ENCODE measurements at regions of chr2 and their contacts with region 1.

Region 1: GRCh38 chr2:174985630-174986029 is 19.6 kb downstream of the CHN1 start:
- DNase-seq: no peak
- H3K4me3 Mint-ChIP-seq: no peak overlapping the region
- H3K27ac Mint-ChIP-seq: no peak overlapping the region
- H3K4me1 Mint-ChIP-seq: no peaks in the 10 kb centered on the region
- H3K27me3 Mint-ChIP-seq: no peaks in the 10 kb centered on the region
- CTCF ChIP-seq: no peak

Region 2: DNA sequence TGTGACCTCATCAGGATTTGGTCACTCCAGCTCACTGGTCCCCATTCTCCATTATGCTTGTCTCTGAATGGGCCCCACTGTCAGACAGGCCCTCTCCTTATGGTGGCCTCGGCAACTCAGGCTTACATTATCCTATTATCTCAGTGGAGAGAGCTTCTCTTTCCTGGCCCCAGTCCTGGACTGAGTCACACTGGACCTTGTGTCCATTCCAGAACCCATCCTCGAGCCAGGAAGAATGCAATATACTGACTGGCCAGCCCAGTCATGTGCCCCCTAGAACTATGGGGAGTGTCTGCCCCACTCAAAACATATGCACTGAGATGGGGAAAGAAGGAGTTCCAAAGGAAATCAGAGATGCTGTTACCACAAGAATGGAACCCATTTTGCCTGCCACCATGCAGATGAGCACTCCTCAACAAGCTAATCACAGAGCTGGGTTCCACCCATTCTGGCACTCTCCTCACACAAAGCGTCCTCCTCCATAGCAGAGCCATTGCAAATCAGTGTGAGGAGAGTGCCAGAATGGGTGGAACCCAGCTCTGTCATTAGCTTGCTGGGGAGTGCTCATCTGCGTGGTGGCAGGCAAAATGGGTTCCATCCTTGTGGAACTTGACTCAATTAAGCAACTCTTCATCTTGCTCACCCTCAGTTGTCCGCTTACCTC is 293.2 kb before region 1 on chr2:
- CTCF ChIA-PET with region 1: no interaction called
- intact Hi-C with region 1: no loop called
- DNase-seq: no peak
- H3K4me3 Mint-ChIP-seq: no peak overlapping the region
- H3K27ac Mint-ChIP-seq: no peak overlapping the region
- H3K4me1 Mint-ChIP-seq: peaks cover 9% of the 10 kb centered on the region
- H3K27me3 Mint-ChIP-seq: peaks cover 69% of the 10 kb centered on the region
- CTCF ChIP-seq: no peak

Region 3: GRCh38 chr2:174748948-174749347 is 236.7 kb before region 1 on chr2:
- CTCF ChIA-PET with region 1: interaction called, 11 read pairs
- intact Hi-C with region 1: no loop called
- DNase-seq: peak; percentile 86
- H3K4me3 Mint-ChIP-seq: no peak overlapping the region
- H3K27ac Mint-ChIP-seq: no peak overlapping the region
- H3K4me1 Mint-ChIP-seq: no peaks in the 10 kb centered on the region
- H3K27me3 Mint-ChIP-seq: peaks cover 22% of the 10 kb centered on the region
- CTCF ChIP-seq: peak; percentile 74

Region 4: GRCh38 chr2:175062787-175063585 is 77.4 kb after region 1 on chr2:
- CTCF ChIA-PET with region 1: no interaction called
- intact Hi-C with region 1: no loop called
- DNase-seq: no peak
- H3K4me3 Mint-ChIP-seq: no peak overlapping the region
- H3K27ac Mint-ChIP-seq: no peak overlapping the region
- H3K4me1 Mint-ChIP-seq: no peaks in the 10 kb centered on the region
- H3K27me3 Mint-ChIP-seq: no peaks in the 10 kb centered on the region
- CTCF ChIP-seq: no peak

Measured in Calu3 (cell line).